ENCODE measurements at regions of chr16 and their contacts with region 1.

Region 1: DNA sequence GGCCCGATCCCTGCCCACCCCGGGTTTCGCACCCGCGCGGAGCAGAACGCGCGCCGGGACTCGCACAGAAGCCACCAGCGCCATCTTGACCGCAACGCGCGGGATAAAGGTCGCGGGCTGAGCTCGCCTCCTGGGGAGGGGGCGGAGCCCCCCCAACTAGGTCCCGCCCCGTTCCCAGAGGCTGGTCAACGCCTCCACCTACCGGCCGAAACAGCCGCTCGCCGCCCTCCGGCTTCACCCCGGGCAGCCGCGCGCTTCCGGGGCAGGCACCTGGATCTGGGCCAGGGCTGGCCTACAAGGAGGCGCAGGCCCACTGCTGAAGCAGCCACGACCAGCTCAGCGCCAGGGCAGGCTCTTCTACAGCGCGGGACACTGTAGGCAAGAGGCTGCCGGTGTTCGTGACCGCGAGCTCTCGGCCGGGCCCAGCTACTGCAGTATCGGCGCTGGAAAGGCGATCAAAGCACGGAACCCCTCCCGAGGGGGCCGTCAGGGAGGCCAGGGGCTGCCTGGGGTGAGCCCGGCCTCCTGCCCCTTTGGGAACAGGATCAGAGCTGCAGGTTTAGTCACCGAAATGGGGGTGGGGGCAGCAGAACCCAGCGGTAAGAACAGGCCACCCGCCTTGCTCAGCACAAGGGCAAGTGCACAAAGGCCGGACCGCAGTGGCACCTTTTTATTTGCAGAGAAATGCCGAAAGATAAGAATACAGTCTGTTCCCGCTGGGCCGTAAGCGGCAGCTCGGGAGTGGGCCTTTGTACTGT is at the start of gene ECI1:
- DNase-seq: peak; percentile 94
- ATAC-seq: peak; percentile 93
- H3K4me3 Mint-ChIP-seq: peak within 1 kb of the TSS; percentile 92
- H3K27ac Mint-ChIP-seq: peak within 1 kb of the TSS; percentile 98
- H3K4me1 Mint-ChIP-seq: peaks cover 9% of the 10 kb centered on the region
- H3K27me3 Mint-ChIP-seq: no peaks in the 10 kb centered on the region
- CTCF ChIP-seq: peak; percentile 13; the same call in 1 of the 2 replicates
- total RNA-seq, gene ECI1: 100 to 110 TPM (median 106 TPM) in 3 replicates

Region 2: GRCh38 chr16:1959269-1960049 is 292.2 kb before region 1 on chr16 and contains the start of gene NDUFB10:
- CTCF ChIA-PET with region 1: no interaction called
- POLR2A ChIA-PET with region 1: no interaction called
- DNase-seq: peak; percentile 92
- ATAC-seq: peak; percentile 34
- H3K4me3 Mint-ChIP-seq: peak within 1 kb of the TSS; percentile 93
- H3K27ac Mint-ChIP-seq: peak within 1 kb of the TSS; percentile 77
- H3K4me1 Mint-ChIP-seq: peaks cover 34% of the 10 kb centered on the region
- H3K27me3 Mint-ChIP-seq: peaks cover 6% of the 10 kb centered on the region
- CTCF ChIP-seq: no peak
- total RNA-seq, gene NDUFB10: 200 to 228 TPM (median 205 TPM) in 3 replicates

Region 3: GRCh38 chr16:2213817-2214720 is 37.6 kb before region 1 on chr16:
- CTCF ChIA-PET with region 1: interaction called, 10 read pairs
- POLR2A ChIA-PET with region 1: interaction called, 6 read pairs
- DNase-seq: no peak
- ATAC-seq: no peak
- H3K4me3 Mint-ChIP-seq: peak overlapping the region; percentile 74
- H3K27ac Mint-ChIP-seq: peak overlapping the region; percentile 32; the same call in 1 of the 2 replicates
- H3K4me1 Mint-ChIP-seq: peaks cover 25% of the 10 kb centered on the region
- H3K27me3 Mint-ChIP-seq: no peaks in the 10 kb centered on the region
- CTCF ChIP-seq: no peak

Region 4: DNA sequence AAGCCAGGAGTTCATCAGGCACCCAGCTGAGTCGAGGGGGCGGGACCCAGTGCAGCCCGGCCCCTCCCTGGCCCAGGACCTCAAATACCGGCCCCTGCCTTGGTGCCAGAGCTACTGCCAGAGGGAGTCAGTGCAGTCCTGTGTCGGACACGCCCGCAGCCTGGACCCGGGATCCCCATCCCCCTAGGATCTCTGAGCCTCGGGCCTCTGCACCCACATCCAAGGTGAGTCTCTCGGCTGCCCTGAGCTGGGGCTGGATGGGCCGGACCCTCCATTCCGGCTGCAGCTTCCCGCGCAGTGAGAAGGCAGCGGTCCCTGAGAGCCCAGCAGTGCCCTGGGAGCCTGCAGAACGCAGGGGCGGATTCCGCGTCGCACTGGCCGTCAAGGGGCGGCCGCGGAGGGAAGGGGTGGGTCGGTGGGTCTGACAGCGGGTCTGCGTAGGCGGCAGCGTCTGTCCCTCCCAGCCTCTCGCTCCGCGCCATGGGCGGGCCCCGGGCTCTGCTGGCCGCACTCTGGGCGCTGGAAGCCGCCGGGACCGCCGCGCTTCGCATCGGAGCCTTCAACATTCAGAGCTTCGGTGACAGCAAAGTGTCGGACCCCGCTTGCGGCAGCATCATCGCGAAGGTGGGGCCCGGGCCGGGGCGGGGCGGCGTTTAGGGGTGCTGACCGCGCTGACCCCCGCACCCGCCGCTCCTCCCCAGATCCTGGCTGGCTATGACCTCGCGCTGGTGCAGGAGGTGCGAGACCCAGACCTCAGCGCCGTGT is 15.1 kb before region 1 on chr16 and contains the start of gene DNASE1L2:
- CTCF ChIA-PET with region 1: interaction called, 19 read pairs
- POLR2A ChIA-PET with region 1: interaction called, 28 read pairs
- DNase-seq: peak; percentile 66
- ATAC-seq: peak; percentile 55
- H3K4me3 Mint-ChIP-seq: peak within 1 kb of the TSS; percentile 55
- H3K27ac Mint-ChIP-seq: no peak within 1 kb of the TSS
- H3K4me1 Mint-ChIP-seq: no peaks in the 10 kb centered on the region
- H3K27me3 Mint-ChIP-seq: peaks cover 16% of the 10 kb centered on the region
- CTCF ChIP-seq: no peak
- total RNA-seq, gene DNASE1L2: 0.66 to 1.1 TPM (median 1.0 TPM) in 3 replicates

Region 5: DNA sequence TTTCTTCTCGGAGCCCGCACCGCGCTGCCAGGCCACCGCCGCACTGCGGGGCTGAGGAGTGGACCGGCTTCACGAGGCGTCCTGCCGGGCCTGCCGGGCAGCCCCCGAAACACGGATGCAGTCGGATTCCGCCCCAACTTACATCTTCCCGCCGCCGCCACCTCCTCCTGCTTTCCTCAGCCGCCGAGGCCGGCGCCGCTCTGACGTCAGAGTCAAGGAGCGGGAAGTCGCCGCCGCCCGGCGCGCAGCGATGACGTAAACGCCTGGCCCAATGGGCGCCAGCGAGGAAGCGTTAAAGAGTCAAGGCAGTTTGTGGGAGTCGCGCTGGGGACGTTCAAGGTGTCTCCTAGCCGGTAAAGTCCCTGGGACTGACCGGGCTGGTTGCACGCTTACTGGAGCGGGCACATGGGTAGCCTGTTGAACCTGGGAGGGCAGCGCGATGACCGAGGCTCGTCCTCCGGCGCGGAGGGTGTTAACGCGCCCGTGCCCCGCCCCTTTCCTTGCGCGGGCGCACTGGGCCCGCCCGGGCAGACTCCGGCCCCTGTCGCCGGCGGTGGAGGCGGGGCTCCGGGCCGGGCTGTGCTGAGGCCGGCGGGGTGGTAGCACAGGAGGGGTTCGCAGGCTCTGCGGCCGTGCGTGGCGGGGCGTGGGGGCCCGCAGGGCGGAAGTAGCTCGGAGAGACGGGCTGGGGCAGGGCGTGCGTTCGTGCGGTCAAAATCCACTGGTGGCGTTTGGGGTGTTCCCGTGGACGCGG is 16.4 kb after region 1 on chr16 and contains the start of gene RNPS1:
- CTCF ChIA-PET with region 1: interaction called, 12 read pairs
- POLR2A ChIA-PET with region 1: interaction called, 12 read pairs
- DNase-seq: peak; percentile 94
- ATAC-seq: peak; percentile 91
- H3K4me3 Mint-ChIP-seq: peak within 1 kb of the TSS; percentile 90
- H3K27ac Mint-ChIP-seq: peak within 1 kb of the TSS; percentile 99
- H3K4me1 Mint-ChIP-seq: peaks cover 31% of the 10 kb centered on the region
- H3K27me3 Mint-ChIP-seq: no peaks in the 10 kb centered on the region
- CTCF ChIP-seq: no peak
- total RNA-seq, gene RNPS1: 331 to 333 TPM (median 333 TPM) in 3 replicates